Activated CD4-positive, alpha-beta T cell treated with anti-CD3 and anti-CD28 coated beads for 36 hours (primary cell): ENCODE measurements at regions of chr5 and their contacts with region 1.

Region 1: DNA sequence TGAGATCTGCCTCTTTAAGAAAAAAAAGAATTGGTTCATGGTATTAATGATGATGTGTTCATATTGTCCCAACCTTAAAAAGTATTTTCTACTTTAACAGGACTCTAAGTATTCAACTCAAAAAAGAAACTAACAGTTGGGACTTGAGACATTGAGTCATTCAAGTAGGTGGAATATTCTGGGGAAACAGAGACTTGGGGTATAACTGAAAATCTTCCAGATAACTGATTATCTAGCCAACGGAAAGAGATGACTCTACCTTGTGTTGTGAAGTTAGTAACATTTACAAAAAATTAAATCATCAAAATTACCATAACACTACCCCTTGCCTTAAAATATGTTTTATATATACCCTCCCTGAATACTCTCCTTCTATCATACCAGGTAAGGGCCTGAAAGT is 19.1 kb downstream of the OXCT1 start:
- DNase-seq: no peak
- ATAC-seq: peak; percentile 67
- H3K4me3 Mint-ChIP-seq: no peak overlapping the region
- H3K27ac Mint-ChIP-seq: peak overlapping the region; percentile 90
- H3K4me1 Mint-ChIP-seq: peaks cover 38% of the 10 kb centered on the region
- H3K27me3 Mint-ChIP-seq: no peaks in the 10 kb centered on the region

Region 2: DNA sequence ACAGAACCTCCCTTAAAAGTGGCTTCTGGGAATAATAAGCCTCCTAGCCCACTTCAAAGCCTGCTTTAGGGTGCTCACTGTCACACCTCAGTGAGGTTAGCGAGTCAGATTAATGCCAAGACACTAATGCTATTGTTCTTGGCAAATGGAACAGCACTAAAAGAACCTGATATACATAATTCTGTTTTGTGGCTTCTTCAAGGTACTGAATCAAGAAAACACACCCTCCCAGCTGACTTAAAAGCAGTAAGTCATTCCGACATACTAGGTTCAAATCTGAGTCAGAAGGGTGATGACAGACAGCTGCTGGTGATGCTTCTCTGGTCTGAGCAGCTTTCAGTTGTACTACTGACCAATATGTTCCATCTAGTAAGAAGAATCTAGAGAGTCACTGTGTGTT is 102.5 kb before region 1 on chr5:
- CTCF ChIA-PET with region 1: interaction called, 3 read pairs
- POLR2A ChIA-PET with region 1: no interaction called
- intact Hi-C with region 1: loop called (anchors 1 to 5 kb)
- DNase-seq: peak; percentile 59
- ATAC-seq: peak; percentile 94
- H3K4me3 Mint-ChIP-seq: no peak overlapping the region
- H3K27ac Mint-ChIP-seq: no peak overlapping the region
- H3K4me1 Mint-ChIP-seq: peaks cover 28% of the 10 kb centered on the region
- H3K27me3 Mint-ChIP-seq: no peaks in the 10 kb centered on the region

Region 3: GRCh38 chr5:42074353-42074752 is 223.2 kb after region 1 on chr5:
- CTCF ChIA-PET with region 1: no interaction called
- POLR2A ChIA-PET with region 1: no interaction called
- intact Hi-C with region 1: no loop called
- DNase-seq: no peak
- ATAC-seq: no peak
- H3K4me3 Mint-ChIP-seq: no peak overlapping the region
- H3K27ac Mint-ChIP-seq: no peak overlapping the region
- H3K4me1 Mint-ChIP-seq: no peaks in the 10 kb centered on the region
- H3K27me3 Mint-ChIP-seq: peaks cover 7% of the 10 kb centered on the region